Panc1 (cell line): ENCODE measurements at regions of chr4 and their contacts with region 1.

Region 1: DNA sequence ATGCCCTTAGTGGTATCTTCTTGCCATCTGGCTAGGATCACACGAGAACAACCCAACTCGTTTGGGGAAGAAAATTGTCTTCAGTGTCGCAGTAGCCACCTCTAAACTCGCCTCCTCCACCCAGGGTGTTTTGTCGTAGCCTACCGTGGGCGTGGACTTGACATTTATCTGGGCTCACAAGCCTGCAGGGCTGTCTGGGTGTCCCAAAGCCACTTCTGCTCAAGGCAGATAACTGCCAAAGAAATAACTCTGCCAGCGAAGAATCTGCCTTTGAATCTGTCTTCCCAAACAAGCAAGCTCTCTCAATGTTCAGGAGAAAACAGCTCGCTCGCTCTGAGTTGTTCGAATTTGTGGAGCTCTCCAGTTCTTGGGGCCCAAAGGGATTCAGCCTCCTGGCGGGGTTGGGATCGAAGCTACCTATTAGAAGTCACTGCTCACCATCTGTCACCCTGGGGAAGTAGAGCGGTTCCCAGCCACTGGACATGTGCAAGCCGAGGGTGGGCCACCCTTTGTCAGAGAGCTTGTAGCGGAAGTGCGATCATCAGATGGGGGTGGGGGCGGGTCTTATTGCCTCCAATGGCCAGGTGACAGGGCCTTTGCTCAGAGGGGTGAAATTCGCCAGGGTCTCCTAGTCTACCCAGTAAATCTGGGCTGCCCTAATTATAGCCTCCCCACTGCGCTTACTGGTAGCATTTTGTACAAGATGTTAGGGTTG is 14.8 kb downstream of the BLOC1S4 start:
- DNase-seq: no peak
- ATAC-seq: no peak; the same call in 1 of the 2 replicates
- H3K4me3 ChIP-seq: no peak overlapping the region
- H3K27ac ChIP-seq: no peak overlapping the region
- H3K4me1 ChIP-seq: no peaks in the 10 kb centered on the region; the same call in 1 of the 2 replicates
- H3K27me3 ChIP-seq: no peaks in the 10 kb centered on the region
- CTCF ChIP-seq: no peak

Region 2: GRCh38 chr4:6362896-6363295 is 367.9 kb before region 1 on chr4:
- CTCF ChIA-PET with region 1: no interaction called
- POLR2A ChIA-PET with region 1: no interaction called
- in situ Hi-C with region 1: no loop called
- intact Hi-C with region 1: no loop called
- DNase-seq: no peak
- ATAC-seq: no peak
- H3K4me3 ChIP-seq: no peak overlapping the region
- H3K27ac ChIP-seq: no peak overlapping the region
- H3K4me1 ChIP-seq: no peaks in the 10 kb centered on the region
- H3K27me3 ChIP-seq: no peaks in the 10 kb centered on the region
- CTCF ChIP-seq: no peak

Region 3: GRCh38 chr4:6625262-6625661 is 105.5 kb before region 1 on chr4:
- CTCF ChIA-PET with region 1: no interaction called
- POLR2A ChIA-PET with region 1: no interaction called
- in situ Hi-C with region 1: no loop called
- intact Hi-C with region 1: no loop called
- DNase-seq: no peak
- ATAC-seq: no peak
- H3K4me3 ChIP-seq: no peak overlapping the region
- H3K27ac ChIP-seq: no peak overlapping the region
- H3K4me1 ChIP-seq: no peaks in the 10 kb centered on the region
- H3K27me3 ChIP-seq: no peaks in the 10 kb centered on the region
- CTCF ChIP-seq: no peak

Region 4: GRCh38 chr4:6824071-6824470 is 93.3 kb after region 1 on chr4:
- CTCF ChIA-PET with region 1: no interaction called
- POLR2A ChIA-PET with region 1: no interaction called
- in situ Hi-C with region 1: no loop called
- intact Hi-C with region 1: no loop called
- DNase-seq: no peak
- ATAC-seq: no peak
- H3K4me3 ChIP-seq: no peak overlapping the region
- H3K27ac ChIP-seq: no peak overlapping the region
- H3K4me1 ChIP-seq: no peaks in the 10 kb centered on the region
- H3K27me3 ChIP-seq: no peaks in the 10 kb centered on the region
- CTCF ChIP-seq: no peak

Region 5: DNA sequence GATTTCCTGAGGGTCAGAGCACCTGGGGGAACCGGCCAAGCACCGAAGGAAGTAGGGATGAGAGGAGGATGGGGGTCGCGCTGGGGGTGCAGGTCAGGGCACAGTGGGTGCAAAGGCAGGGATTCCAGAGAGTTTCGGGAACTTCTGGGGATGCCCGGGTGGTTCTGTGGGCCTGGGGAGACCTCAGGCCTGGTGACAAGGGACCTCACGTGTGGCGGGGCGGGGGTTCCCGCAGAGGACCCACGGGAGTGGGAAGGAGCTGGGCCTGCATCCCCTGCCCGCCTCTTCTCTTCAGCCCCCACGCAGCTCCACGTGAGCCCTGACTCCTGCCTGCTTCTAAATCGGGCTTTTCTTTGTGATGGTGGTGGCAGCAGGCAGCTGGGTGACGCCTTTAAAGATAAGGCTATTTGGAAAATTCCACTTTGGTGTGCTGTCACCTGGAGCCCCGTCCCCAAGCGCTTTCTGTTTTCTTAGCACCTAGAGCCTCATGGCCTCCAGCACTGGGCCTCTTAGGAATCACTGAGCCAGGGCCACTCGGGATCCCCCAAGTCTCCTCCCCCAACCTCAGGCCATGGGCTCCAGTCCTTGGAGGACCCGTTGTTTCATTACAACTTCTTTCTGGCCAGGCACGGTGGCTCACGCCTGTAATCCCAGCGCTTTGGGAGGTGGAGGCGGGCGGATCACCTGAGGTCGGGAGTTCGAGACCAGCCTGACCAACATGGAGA is 171.7 kb after region 1 on chr4:
- CTCF ChIA-PET with region 1: no interaction called
- POLR2A ChIA-PET with region 1: interaction called, 11 read pairs
- in situ Hi-C with region 1: no loop called
- intact Hi-C with region 1: no loop called
- DNase-seq: no peak
- ATAC-seq: no peak
- H3K4me3 ChIP-seq: no peak overlapping the region
- H3K27ac ChIP-seq: no peak overlapping the region
- H3K4me1 ChIP-seq: peaks cover 3% of the 10 kb centered on the region; the same call in 1 of the 2 replicates
- H3K27me3 ChIP-seq: no peaks in the 10 kb centered on the region
- CTCF ChIP-seq: no peak

Region 6: DNA sequence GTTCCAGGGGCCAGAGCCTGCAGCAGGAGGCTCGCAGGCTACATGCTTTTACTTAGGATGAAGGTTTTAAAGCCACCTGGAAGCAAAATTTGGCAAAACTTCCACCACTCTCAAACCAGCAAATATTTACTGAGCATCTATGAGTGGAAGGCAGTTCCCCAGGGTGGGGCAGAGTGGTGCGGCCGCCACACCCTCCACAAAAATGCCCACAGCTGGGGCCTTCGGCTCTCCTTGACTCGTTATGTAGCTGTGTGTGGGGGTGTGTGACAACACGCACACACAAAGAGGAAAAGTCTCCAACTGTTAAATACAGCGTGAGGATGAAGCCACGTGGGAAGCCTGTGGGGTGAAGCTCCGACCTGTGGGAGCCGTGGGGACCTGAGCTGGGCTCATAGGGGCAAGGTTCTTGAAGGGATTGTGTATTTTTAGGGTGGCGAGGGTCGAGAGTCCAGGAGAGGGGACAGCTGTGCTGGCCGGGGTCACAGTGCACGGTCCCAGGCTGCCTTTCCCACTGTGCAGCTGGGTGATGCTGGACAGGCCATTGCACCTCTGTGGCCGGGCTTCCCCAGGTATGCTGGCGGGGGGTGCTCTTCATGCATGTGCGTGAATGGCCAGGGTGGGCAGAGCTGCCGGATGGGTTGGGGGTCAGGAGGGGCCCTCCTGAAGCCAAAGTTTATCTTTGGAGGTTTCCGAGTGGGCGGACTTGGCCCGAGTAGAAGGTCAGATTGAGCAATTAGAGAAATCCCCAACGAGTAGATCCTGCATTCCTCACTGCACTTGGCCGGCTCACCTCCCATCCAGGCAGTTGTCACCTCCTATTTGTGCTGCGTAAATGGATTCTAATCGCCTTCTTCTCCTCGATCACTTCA is 486.9 kb after region 1 on chr4:
- CTCF ChIA-PET with region 1: no interaction called
- POLR2A ChIA-PET with region 1: no interaction called
- in situ Hi-C with region 1: no loop called
- intact Hi-C with region 1: no loop called
- DNase-seq: no peak
- ATAC-seq: no peak
- H3K4me3 ChIP-seq: no peak overlapping the region
- H3K27ac ChIP-seq: no peak overlapping the region
- H3K4me1 ChIP-seq: no peaks in the 10 kb centered on the region
- H3K27me3 ChIP-seq: no peaks in the 10 kb centered on the region
- CTCF ChIP-seq: no peak